Activated CD8-positive, alpha-beta T cell treated with anti-CD3 and anti-CD28 coated beads for 36 hours (primary cell): ENCODE measurements at regions of chr15 and their contacts with region 1.

Region 1: GRCh38 chr15:101294731-101295606 is at the start of gene SNRPA1:
- DNase-seq: peak; percentile 98
- ATAC-seq: peak; percentile 84
- H3K4me3 Mint-ChIP-seq: peak within 1 kb of the TSS; percentile 80
- H3K27ac Mint-ChIP-seq: peak within 1 kb of the TSS; percentile 95
- H3K4me1 Mint-ChIP-seq: peaks cover 42% of the 10 kb centered on the region
- H3K27me3 Mint-ChIP-seq: no peaks in the 10 kb centered on the region
- CTCF ChIP-seq: no peak
- total RNA-seq, gene SNRPA1: 243 to 249 TPM

Region 2: DNA sequence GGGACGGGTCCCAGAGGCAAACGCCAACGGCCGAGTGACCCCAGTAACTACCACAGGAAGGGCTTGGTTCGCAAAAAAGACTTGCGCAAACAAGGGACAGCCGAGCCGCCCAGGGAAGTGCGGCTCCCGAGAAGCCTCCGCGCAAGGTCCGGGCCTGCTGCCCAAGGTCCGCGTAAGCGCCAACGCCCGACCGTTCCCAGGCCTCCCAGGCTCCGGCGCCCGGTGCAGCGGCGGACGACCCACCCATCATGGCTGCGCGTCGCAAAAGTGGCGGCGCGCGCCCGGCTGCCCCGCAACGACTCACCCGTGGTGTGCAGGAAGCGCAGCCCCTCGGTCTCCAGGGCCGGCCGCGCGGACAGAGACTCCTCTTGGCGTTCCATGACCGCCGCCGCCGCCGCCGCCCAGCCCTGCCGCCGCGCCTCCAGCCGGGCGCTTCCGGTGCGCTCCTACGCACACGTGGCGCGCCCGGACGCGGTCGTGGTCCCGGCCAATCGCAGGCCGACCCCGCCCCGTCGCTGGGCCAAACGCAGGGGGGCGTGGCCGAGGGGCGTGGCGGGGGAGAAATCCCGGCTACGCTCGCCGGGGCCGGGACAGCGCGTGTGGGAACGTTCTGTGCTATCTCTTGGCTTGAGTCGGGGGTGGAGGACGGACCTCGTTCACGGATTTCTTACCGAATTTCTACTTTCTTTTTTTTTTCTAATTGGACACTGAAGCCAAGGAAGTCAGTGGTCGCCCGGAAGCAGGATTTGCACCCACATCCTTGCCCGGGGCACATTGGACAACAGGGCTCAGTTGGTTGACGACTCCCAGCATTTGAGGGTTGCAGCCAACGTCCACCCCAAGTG is 17.7 kb before region 1 on chr15 and contains the start of gene SELENOS:
- CTCF ChIA-PET with region 1: interaction called, 3 read pairs
- POLR2A ChIA-PET with region 1: interaction called, 133 read pairs
- intact Hi-C with region 1: no loop called
- DNase-seq: peak; percentile 88
- ATAC-seq: peak; percentile 93
- H3K4me3 Mint-ChIP-seq: peak within 1 kb of the TSS; percentile 97
- H3K27ac Mint-ChIP-seq: peak within 1 kb of the TSS; percentile 86
- H3K4me1 Mint-ChIP-seq: peaks cover 25% of the 10 kb centered on the region
- H3K27me3 Mint-ChIP-seq: no peaks in the 10 kb centered on the region
- CTCF ChIP-seq: peak; percentile 14
- total RNA-seq, gene SELENOS: 18.8 to 21.6 TPM

Region 3: GRCh38 chr15:101501703-101502373 is 206.9 kb after region 1 on chr15:
- CTCF ChIA-PET with region 1: interaction called, 27 read pairs
- POLR2A ChIA-PET with region 1: no interaction called
- intact Hi-C with region 1: loop called (anchors 5 kb)
- DNase-seq: peak; percentile 79
- ATAC-seq: peak; percentile 93
- H3K4me3 Mint-ChIP-seq: peak overlapping the region; percentile 39
- H3K27ac Mint-ChIP-seq: peak overlapping the region; percentile 11
- H3K4me1 Mint-ChIP-seq: peaks cover 18% of the 10 kb centered on the region
- H3K27me3 Mint-ChIP-seq: peaks cover 19% of the 10 kb centered on the region
- CTCF ChIP-seq: peak; percentile 78

Region 4: DNA sequence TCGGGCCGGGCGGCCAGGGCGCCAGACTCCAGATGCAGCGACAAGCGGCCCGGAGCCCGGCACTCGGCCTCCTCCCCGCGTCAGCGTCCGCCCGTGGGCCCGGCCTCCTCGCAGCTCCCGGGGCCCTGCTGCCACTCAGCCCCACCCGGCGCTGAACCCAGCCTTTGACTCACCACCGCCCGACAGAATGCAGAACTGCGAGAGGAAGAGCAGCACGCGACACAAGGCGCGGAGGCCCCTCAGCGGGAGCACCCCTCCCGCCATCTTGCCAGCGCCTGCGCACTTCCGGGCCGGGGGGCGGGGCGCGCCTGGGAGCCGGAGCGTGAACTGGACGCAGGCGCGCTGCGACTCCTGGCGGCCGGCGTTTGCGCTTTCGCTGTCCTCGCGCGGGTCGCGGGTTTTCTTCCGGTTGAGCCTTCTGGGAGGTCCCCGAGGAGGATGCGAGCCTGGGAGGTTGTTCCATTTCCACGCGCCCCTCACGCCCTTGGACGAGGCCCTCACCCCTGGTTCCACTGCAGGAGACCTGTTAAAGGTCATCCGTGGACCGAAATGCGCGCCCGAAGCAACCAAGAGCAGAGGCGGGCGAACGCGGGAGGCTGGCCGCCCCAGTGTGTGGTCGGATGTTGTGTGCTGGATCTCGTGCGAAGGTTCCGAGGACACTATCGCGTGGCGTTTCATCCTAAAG is 357.3 kb after region 1 on chr15 and contains the start of gene TM2D3:
- CTCF ChIA-PET with region 1: interaction called, 4 read pairs
- POLR2A ChIA-PET with region 1: interaction called, 10 read pairs
- intact Hi-C with region 1: loop called (anchors 5 kb)
- DNase-seq: peak; percentile 95
- ATAC-seq: peak; percentile 94
- H3K4me3 Mint-ChIP-seq: peak within 1 kb of the TSS; percentile 88
- H3K27ac Mint-ChIP-seq: peak within 1 kb of the TSS; percentile 96
- H3K4me1 Mint-ChIP-seq: peaks cover 37% of the 10 kb centered on the region
- H3K27me3 Mint-ChIP-seq: no peaks in the 10 kb centered on the region
- CTCF ChIP-seq: peak; percentile 71
- total RNA-seq, gene TM2D3: 37.8 to 38.5 TPM